PC-9 (cell line): ENCODE measurements at regions of chr20 and their contacts with region 1.

Region 1: GRCh38 chr20:11544029-11544678 is 373.5 kb upstream of the BTBD3 start:
- DNase-seq: peak; percentile 49 to 62
- H3K4me3 ChIP-seq: no peak overlapping the region
- H3K27ac ChIP-seq: peak overlapping the region; percentile 11
- H3K4me1 ChIP-seq: peaks cover 13% of the 10 kb centered on the region
- H3K27me3 ChIP-seq: no peaks in the 10 kb centered on the region
- CTCF ChIP-seq: peak; percentile 81

Region 2: DNA sequence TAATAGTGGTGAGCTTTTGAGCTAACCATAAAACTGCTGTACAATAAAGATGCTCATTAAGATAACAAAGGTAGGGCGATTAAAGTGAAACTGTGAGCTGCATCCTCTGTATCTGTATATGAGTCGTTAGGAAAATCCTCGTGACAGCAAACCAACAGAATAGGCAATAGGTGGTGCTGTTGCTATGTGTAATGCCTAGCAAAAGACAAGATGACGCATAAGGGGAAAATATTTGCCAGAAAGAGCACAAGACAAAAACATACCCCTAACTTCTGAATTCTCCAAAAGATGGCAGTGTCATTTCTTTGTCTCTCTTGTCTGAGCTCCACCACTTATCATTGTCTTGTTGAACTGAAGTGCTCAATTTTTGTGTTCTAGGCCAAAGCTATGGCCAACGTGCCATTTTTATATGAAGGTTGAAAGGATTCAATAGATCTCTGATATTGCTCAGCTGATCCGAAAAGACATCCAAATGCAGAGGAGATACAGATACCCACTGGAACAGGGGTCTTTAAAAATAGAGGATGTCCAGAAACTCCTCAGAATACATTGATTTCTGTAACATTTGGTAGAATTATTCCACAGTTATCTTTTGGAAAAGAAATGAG is 1565.7 kb before region 1 on chr20:
- CTCF ChIA-PET with region 1: interaction called, 5 read pairs
- POLR2A ChIA-PET with region 1: no interaction called
- intact Hi-C with region 1: loop called (anchors 1 kb)
- DNase-seq: peak; percentile 35 to 74
- H3K4me3 ChIP-seq: peak overlapping the region; percentile 19; the same call in 1 of the 2 replicates
- H3K27ac ChIP-seq: no peak overlapping the region
- H3K4me1 ChIP-seq: peaks cover 11% of the 10 kb centered on the region; the same call in 1 of the 2 replicates
- H3K27me3 ChIP-seq: no peaks in the 10 kb centered on the region
- CTCF ChIP-seq: peak; percentile 81

Region 3: DNA sequence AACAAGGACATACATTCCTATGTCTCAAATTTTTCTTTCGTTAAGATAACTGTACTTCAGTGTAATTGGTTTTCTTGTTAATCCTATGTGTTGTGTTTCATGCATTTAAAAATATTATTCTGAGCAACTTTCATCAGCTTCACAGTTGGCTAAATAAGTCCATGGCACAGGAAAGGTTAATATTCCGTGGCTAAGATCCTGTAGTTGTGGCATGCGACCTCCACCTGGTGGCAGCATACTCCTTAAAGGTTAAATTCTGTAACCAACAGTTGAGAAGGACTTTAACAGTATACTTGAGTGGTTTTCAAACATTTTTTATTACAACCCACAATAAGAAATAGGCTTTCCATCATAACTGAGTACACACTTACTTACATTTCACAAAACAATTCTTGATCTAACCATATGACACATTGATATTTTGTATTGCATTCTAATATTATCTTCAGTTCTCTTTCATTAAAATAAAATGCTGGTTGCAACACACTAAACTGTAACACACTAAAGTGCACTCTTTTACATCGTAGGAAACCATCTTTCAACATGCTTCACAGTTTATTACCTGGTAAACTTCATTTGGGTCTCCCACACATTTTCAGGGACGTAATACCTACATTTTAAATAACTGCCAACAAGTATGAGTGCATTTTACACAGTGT is 990.7 kb before region 1 on chr20:
- CTCF ChIA-PET with region 1: no interaction called
- POLR2A ChIA-PET with region 1: no interaction called
- intact Hi-C with region 1: loop called (anchors 1 kb)
- DNase-seq: peak; percentile 51 to 60
- H3K4me3 ChIP-seq: no peak overlapping the region
- H3K27ac ChIP-seq: no peak overlapping the region
- H3K4me1 ChIP-seq: peaks cover 29% of the 10 kb centered on the region
- H3K27me3 ChIP-seq: no peaks in the 10 kb centered on the region
- CTCF ChIP-seq: peak; percentile 87

Region 4: DNA sequence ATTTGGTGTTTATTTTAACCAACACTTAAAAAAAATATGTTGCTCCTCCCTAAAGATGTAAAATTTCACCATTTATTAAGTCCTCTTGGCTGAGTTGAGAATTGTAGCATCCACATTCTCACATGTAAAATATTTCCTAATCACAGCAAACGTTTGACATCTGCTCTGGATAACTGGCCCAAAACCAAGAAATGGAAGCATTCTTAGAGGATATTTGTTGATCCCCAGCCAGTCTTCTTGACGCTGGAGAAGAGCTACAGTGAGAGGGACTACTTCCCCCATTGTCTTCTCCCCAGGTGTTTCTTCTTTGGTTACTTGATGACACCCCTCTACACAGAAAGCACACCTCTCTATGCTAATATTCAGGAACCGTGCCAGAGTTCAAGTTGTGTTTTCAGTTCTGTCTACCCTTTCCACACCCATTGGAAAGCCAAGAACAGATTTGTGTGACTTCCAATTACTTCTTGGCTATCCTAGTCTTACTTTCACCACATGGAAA is 415.9 kb before region 1 on chr20:
- CTCF ChIA-PET with region 1: no interaction called
- POLR2A ChIA-PET with region 1: no interaction called
- intact Hi-C with region 1: no loop called
- DNase-seq: no peak
- H3K4me3 ChIP-seq: no peak overlapping the region
- H3K27ac ChIP-seq: no peak overlapping the region
- H3K4me1 ChIP-seq: no peaks in the 10 kb centered on the region
- H3K27me3 ChIP-seq: no peaks in the 10 kb centered on the region
- CTCF ChIP-seq: no peak

Region 5: GRCh38 chr20:11204926-11205768 is 339.0 kb before region 1 on chr20:
- CTCF ChIA-PET with region 1: no interaction called
- POLR2A ChIA-PET with region 1: no interaction called
- intact Hi-C with region 1: loop called (anchors 5 kb)
- DNase-seq: peak in 1 of 2 experiments; percentile 54
- H3K4me3 ChIP-seq: no peak overlapping the region
- H3K27ac ChIP-seq: no peak overlapping the region
- H3K4me1 ChIP-seq: peaks cover 7% of the 10 kb centered on the region; the same call in 1 of the 2 replicates
- H3K27me3 ChIP-seq: no peaks in the 10 kb centered on the region
- CTCF ChIP-seq: peak; percentile 68

Region 6: GRCh38 chr20:11376998-11377397 is 167.2 kb before region 1 on chr20:
- CTCF ChIA-PET with region 1: no interaction called
- POLR2A ChIA-PET with region 1: no interaction called
- intact Hi-C with region 1: no loop called
- DNase-seq: no peak
- H3K4me3 ChIP-seq: no peak overlapping the region
- H3K27ac ChIP-seq: no peak overlapping the region
- H3K4me1 ChIP-seq: peaks cover 16% of the 10 kb centered on the region
- H3K27me3 ChIP-seq: no peaks in the 10 kb centered on the region
- CTCF ChIP-seq: no peak

Region 7: GRCh38 chr20:11387189-11387754 is 156.9 kb before region 1 on chr20:
- CTCF ChIA-PET with region 1: no interaction called
- POLR2A ChIA-PET with region 1: no interaction called
- intact Hi-C with region 1: loop called (anchors 1 kb)
- DNase-seq: peak; percentile 55 to 73
- H3K4me3 ChIP-seq: no peak overlapping the region
- H3K27ac ChIP-seq: peak overlapping the region; percentile 85
- H3K4me1 ChIP-seq: peaks cover 23% of the 10 kb centered on the region
- H3K27me3 ChIP-seq: no peaks in the 10 kb centered on the region
- CTCF ChIP-seq: no peak

Region 8: DNA sequence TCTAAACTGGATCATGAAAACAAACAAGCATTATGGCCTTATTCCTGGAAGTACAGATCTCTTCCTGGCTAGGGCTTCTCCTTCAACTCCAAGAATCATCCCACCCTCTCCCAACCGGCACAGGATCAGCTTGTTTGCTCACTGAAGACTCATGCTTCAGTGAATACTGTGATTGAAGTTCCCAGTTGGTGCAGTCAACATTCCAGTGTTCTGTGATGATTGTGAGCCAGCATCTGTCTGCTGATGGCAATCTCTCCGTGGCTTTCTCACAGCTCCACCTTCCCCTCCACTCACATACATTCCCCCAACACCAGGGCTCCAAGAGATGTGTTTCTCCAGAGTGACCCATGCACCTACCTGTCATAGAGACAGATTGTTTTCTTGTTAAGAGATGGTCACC is 47.8 kb before region 1 on chr20:
- CTCF ChIA-PET with region 1: no interaction called
- POLR2A ChIA-PET with region 1: no interaction called
- intact Hi-C with region 1: no loop called
- DNase-seq: peak in 1 of 2 experiments; percentile 10
- H3K4me3 ChIP-seq: no peak overlapping the region
- H3K27ac ChIP-seq: no peak overlapping the region
- H3K4me1 ChIP-seq: 0 out of 2 replicates have a peak, but pooled peaks cover 4% of the 10 kb centered on the region
- H3K27me3 ChIP-seq: no peaks in the 10 kb centered on the region
- CTCF ChIP-seq: no peak